Caco-2 (cell line): ENCODE measurements at regions of chr11 and their contacts with region 1.

Region 1: DNA sequence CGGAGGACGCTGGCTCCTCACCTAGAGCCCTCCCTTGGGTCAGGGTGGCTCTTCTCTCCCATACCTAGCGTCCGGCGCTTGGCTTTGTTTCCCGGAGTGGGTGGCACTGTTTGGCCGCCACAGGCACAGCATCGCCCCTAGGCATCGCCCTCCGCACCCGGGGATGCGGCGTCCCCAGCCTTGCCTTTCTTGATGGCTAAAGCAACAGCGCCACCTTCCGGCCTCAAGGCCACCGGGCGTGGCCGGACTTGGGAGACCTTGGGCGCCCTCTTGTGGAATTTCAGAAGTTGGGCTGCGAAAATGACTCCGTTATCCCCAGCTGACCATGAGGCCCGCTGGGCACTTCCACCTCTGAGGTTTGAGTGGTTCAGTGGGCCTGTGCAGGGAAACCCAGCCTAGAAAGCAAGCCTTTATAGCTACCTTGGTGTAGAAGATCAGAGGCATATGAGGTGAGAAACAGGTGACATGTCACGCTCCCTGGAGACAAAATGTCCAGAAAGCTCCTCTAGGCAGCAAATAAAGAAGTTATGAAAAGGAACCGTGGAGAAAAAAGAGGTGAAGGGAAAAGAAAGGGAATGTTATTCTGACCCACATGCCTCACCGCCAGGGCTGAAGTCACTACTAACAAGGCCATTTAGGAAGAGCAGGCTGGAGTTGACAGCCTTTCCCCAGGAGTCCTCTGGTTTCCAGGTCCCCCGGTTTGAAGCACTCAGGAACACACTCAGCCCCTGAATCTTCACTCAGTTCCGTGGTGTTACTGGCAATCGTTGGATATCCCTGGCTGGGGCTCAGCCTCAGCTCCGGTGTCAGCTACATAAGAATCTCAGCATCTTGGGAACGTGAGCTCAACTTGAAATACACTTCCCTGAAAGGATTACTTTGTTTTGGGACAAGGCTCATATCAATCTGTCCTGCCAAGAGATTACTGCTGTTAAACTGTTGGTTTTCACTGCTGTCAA is 54.1 kb downstream of the SNX19 start:
- DNase-seq: peak; percentile 92 to 95
- H3K4me3 ChIP-seq: no peak overlapping the region
- H3K4me3 Mint-ChIP-seq: no peak overlapping the region
- H3K27ac Mint-ChIP-seq: no peak overlapping the region
- H3K4me1 ChIP-seq: no peaks in the 10 kb centered on the region
- H3K4me1 Mint-ChIP-seq: peaks cover 5% of the 10 kb centered on the region
- H3K27me3 ChIP-seq: no peaks in the 10 kb centered on the region
- H3K27me3 Mint-ChIP-seq: no peaks in the 10 kb centered on the region
- CTCF ChIP-seq: peak; percentile 100

Region 2: DNA sequence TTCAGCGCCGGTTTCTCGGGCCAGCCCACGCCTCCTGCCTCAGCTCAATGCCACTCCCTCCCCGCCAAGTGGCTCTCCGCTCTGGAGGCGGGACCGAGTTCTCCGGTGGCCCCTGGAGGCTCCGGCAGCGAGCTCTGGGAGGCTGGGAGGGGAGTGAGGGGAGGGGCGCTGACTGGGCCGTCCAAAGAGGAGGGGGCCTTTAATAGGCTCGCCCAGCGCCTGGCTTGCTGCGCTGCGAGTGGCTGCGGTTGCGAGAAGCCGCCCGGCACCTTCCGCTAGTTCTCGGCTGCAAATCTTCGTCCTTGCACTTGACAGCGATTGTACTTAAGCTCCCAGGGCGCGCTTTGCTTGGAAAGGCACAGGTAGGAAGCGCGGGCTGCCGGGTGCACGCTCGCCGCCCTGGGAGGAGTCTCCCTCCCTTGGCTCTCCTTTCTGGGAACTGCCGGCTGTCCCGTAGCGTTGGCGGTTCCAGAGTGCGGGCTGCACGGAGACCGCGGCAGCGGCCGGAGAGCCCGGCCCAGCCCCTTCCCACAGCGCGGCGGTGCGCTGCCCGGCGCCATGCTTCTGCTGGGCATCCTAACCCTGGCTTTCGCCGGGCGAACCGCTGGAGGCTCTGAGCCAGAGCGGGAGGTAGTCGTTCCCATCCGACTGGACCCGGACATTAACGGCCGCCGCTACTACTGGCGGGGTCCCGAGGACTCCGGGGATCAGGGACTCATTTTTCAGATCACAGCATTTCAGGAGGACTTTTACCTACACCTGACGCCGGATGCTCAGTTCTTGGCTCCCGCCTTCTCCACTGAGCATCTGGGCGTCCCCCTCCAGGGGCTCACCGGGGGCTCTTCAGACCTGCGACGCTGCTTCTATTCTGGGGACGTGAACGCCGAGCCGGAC is 413.5 kb before region 1 on chr11 and contains the start of gene ADAMTS15:
- CTCF ChIA-PET with region 1: interaction called, 10 read pairs
- POLR2A ChIA-PET with region 1: no interaction called
- intact Hi-C with region 1: no loop called
- DNase-seq: peak; percentile 90 to 93
- H3K4me3 ChIP-seq: peak within 1 kb of the TSS; percentile 51
- H3K4me3 Mint-ChIP-seq: peak within 1 kb of the TSS; percentile 71
- H3K27ac Mint-ChIP-seq: no peak within 1 kb of the TSS
- H3K4me1 ChIP-seq: no peaks in the 10 kb centered on the region
- H3K4me1 Mint-ChIP-seq: peaks cover 5% of the 10 kb centered on the region
- H3K27me3 ChIP-seq: peaks cover 3% of the 10 kb centered on the region
- H3K27me3 Mint-ChIP-seq: peaks cover 14% of the 10 kb centered on the region
- CTCF ChIP-seq: no peak
- total RNA-seq, gene ADAMTS15: 0.12 and 0.20 TPM in 2 replicates

Region 3: DNA sequence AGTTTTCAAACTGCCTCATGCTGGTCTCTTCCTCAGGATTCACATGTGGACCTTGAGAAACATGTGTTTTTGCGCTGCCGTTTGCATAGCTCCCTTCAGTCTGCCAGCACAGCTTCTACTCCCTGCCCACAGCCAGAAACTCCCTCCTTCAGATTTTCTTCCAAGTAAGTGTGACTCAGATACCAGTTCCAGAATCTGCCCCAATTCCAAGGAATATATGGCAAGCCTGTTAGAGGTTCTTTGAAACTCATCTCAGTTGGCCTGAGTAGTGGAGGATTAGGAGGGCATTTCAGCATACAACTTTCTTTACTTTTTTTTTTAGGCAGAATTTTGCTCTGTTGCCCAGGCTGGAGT is 13.0 kb before region 1 on chr11:
- CTCF ChIA-PET with region 1: interaction called, 10 read pairs
- POLR2A ChIA-PET with region 1: no interaction called
- intact Hi-C with region 1: no loop called
- DNase-seq: no peak
- H3K4me3 ChIP-seq: no peak overlapping the region
- H3K4me3 Mint-ChIP-seq: no peak overlapping the region
- H3K27ac Mint-ChIP-seq: no peak overlapping the region
- H3K4me1 ChIP-seq: no peaks in the 10 kb centered on the region
- H3K4me1 Mint-ChIP-seq: no peaks in the 10 kb centered on the region
- H3K27me3 ChIP-seq: no peaks in the 10 kb centered on the region; the same call in 1 of the 2 replicates
- H3K27me3 Mint-ChIP-seq: peaks cover 22% of the 10 kb centered on the region
- CTCF ChIP-seq: no peak

Region 4: GRCh38 chr11:130894322-130895025 is 32.3 kb after region 1 on chr11:
- CTCF ChIA-PET with region 1: interaction called, 7 read pairs
- POLR2A ChIA-PET with region 1: no interaction called
- intact Hi-C with region 1: loop called (anchors 1 kb)
- DNase-seq: peak; percentile 78 to 83
- H3K4me3 ChIP-seq: no peak overlapping the region
- H3K4me3 Mint-ChIP-seq: no peak overlapping the region
- H3K27ac Mint-ChIP-seq: no peak overlapping the region
- H3K4me1 ChIP-seq: no peaks in the 10 kb centered on the region; the same call in 1 of the 2 replicates
- H3K4me1 Mint-ChIP-seq: no peaks in the 10 kb centered on the region
- H3K27me3 ChIP-seq: no peaks in the 10 kb centered on the region
- H3K27me3 Mint-ChIP-seq: no peaks in the 10 kb centered on the region
- CTCF ChIP-seq: peak; percentile 96 to 97